GM12878 (cell line): ENCODE measurements at regions of chr6 and their contacts with region 1.

Region 1: GRCh38 chr6:7324520-7324919 is 11.5 kb upstream of the SSR1 start:
- DNase-seq: no peak
- ATAC-seq: peak; percentile 92
- H3K4me3 ChIP-seq: no peak overlapping the region
- H3K27ac ChIP-seq: no peak overlapping the region
- H3K4me1 ChIP-seq: peaks cover 6% of the 10 kb centered on the region
- H3K27me3 ChIP-seq: no peaks in the 10 kb centered on the region
- CTCF ChIP-seq: no peak
- EP300 ChIP-seq: 0 out of 4 replicates have a peak, but pooled peaks of 1 of the 2 experiments have one; percentile 12
- POLR2A ChIP-seq: no peak
- RAD21 ChIP-seq: no peak

Region 2: GRCh38 chr6:5937169-5937909 is 1387.2 kb before region 1 on chr6:
- CTCF ChIA-PET with region 1: no interaction called
- POLR2A ChIA-PET with region 1: no interaction called
- RAD21 ChIA-PET with region 1: no interaction called
- SMC1A ChIA-PET with region 1: no interaction called
- in situ Hi-C with region 1: no loop called
- intact Hi-C with region 1: no loop called
- DNase-seq: no peak
- ATAC-seq: no peak
- H3K4me3 ChIP-seq: no peak overlapping the region
- H3K27ac ChIP-seq: no peak overlapping the region
- H3K4me1 ChIP-seq: no peaks in the 10 kb centered on the region
- H3K27me3 ChIP-seq: no peaks in the 10 kb centered on the region
- CTCF ChIP-seq: no peak
- EP300 ChIP-seq: no peak
- POLR2A ChIP-seq: no peak
- RAD21 ChIP-seq: no peak

Region 3: GRCh38 chr6:7312616-7313504 is 11.7 kb before region 1 on chr6 and contains the start of gene SSR1:
- CTCF ChIA-PET with region 1: interaction called, 6 read pairs
- POLR2A ChIA-PET with region 1: interaction called, 4 read pairs
- RAD21 ChIA-PET with region 1: interaction called, 7 read pairs
- SMC1A ChIA-PET with region 1: interaction called, 17 read pairs
- in situ Hi-C with region 1: no loop called
- intact Hi-C with region 1: no loop called
- DNase-seq: peak; percentile 85
- ATAC-seq: peak; percentile 99
- H3K4me3 ChIP-seq: peak within 1 kb of the TSS; percentile 95
- H3K27ac ChIP-seq: peak within 1 kb of the TSS; percentile 82
- H3K4me1 ChIP-seq: peaks cover 6% of the 10 kb centered on the region
- H3K27me3 ChIP-seq: no peaks in the 10 kb centered on the region
- CTCF ChIP-seq: no peak
- EP300 ChIP-seq: no peak
- POLR2A ChIP-seq: peak; percentile 96
- RAD21 ChIP-seq: no peak
- polyA plus RNA-seq, gene SSR1: 123 to 151 TPM

Region 4: GRCh38 chr6:7561153-7561964 is 236.8 kb after region 1 on chr6:
- CTCF ChIA-PET with region 1: no interaction called
- POLR2A ChIA-PET with region 1: no interaction called
- RAD21 ChIA-PET with region 1: no interaction called
- SMC1A ChIA-PET with region 1: no interaction called
- in situ Hi-C with region 1: no loop called
- intact Hi-C with region 1: no loop called
- DNase-seq: no peak
- ATAC-seq: no peak
- H3K4me3 ChIP-seq: no peak overlapping the region
- H3K27ac ChIP-seq: no peak overlapping the region
- H3K4me1 ChIP-seq: no peaks in the 10 kb centered on the region
- H3K27me3 ChIP-seq: peaks cover 1 to 4% of the 10 kb centered on the region in 2 experiments; a peak in 1 of 4 replicates
- CTCF ChIP-seq: no peak
- EP300 ChIP-seq: no peak
- POLR2A ChIP-seq: no peak
- RAD21 ChIP-seq: no peak